ENCODE measurements at regions of chr11 and their contacts with region 1.

Region 1: DNA sequence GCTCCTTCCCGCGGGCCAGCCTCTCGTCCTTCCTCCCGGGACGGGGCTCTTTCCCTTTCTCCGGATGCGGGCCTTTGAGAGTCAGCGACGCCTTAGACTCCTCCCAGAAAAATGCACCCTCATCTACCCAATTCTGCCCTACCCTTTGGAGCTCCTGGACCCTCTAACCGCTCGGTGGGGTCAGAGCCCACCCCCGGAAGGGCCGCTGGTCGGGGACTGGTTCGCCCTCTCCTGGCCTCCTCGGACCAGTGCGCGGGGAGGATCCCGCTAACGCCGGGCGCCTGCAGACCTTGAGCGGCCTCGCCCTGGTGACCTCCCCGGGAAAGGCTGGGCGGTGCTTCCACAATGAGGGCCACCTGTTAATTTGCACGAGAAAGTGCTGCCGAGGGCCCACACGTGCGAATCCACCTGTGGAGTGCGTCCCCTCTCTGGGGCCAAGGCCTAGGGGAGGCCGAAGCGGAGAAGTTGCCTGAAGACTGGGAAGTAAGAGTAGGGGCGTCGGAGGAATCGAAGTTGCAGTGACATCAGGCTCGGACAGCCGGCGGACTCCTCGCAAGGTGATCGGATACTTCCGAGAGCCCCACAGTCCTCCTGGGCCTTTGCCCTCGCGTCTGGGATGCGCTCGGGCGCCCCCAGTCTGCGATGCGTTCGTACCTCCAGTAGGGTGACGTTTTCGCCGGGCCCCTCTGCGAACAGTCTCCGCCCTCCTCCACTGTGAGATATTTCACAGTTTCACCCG is 61.5 kb downstream of the ENDOD1 start:
- DNase-seq: peak; percentile 85 to 97
- ATAC-seq: peak; percentile 92 to 98 (median 93)
- H3K4me3 ChIP-seq: peak overlapping the region; percentile 73
- H3K4me3 Mint-ChIP-seq: peak overlapping the region; percentile 90
- H3K27ac ChIP-seq: peak overlapping the region; percentile 81
- H3K27ac Mint-ChIP-seq: peak overlapping the region; percentile 91 to 94
- H3K4me1 ChIP-seq: peaks cover 42% of the 10 kb centered on the region
- H3K4me1 Mint-ChIP-seq: peaks cover 27 to 40% of the 10 kb centered on the region in 2 donors
- H3K27me3 ChIP-seq: no peaks in the 10 kb centered on the region
- H3K27me3 Mint-ChIP-seq: peaks cover 7 to 12% of the 10 kb centered on the region in 2 donors
- CTCF ChIP-seq: peak; percentile 81

Region 2: GRCh38 chr11:94623120-94623735 is 527.9 kb before region 1 on chr11:
- intact Hi-C with region 1: loop called (anchors 5 kb)
- DNase-seq: peak in 1 of 2 donors; percentile 72
- ATAC-seq: peak; percentile 55 to 82 (median 75)
- H3K4me3 ChIP-seq: no peak overlapping the region
- H3K4me3 Mint-ChIP-seq: no peak overlapping the region
- H3K27ac ChIP-seq: no peak overlapping the region
- H3K27ac Mint-ChIP-seq: no peak overlapping the region
- H3K4me1 ChIP-seq: no peaks in the 10 kb centered on the region
- H3K4me1 Mint-ChIP-seq: no peaks in the 10 kb centered on the region
- H3K27me3 ChIP-seq: no peaks in the 10 kb centered on the region
- H3K27me3 Mint-ChIP-seq: peaks cover 0 to 6% of the 10 kb centered on the region in 2 donors
- CTCF ChIP-seq: peak; percentile 48

Region 3: GRCh38 chr11:95067039-95067840 is 83.9 kb before region 1 on chr11:
- intact Hi-C with region 1: loop called (anchors 1 kb)
- DNase-seq: peak; percentile 67 to 86
- ATAC-seq: peak; percentile 72 to 82 (median 74)
- H3K4me3 ChIP-seq: peak overlapping the region; percentile 74
- H3K4me3 Mint-ChIP-seq: peak overlapping the region; percentile 99
- H3K27ac ChIP-seq: peak overlapping the region; percentile 87
- H3K27ac Mint-ChIP-seq: peak overlapping the region; percentile 97 to 99
- H3K4me1 ChIP-seq: peaks cover 6% of the 10 kb centered on the region
- H3K4me1 Mint-ChIP-seq: peaks cover 36 to 38% of the 10 kb centered on the region in 2 donors
- H3K27me3 ChIP-seq: no peaks in the 10 kb centered on the region
- H3K27me3 Mint-ChIP-seq: peaks cover 0 to 5% of the 10 kb centered on the region in 2 donors
- CTCF ChIP-seq: no peak

Region 4: DNA sequence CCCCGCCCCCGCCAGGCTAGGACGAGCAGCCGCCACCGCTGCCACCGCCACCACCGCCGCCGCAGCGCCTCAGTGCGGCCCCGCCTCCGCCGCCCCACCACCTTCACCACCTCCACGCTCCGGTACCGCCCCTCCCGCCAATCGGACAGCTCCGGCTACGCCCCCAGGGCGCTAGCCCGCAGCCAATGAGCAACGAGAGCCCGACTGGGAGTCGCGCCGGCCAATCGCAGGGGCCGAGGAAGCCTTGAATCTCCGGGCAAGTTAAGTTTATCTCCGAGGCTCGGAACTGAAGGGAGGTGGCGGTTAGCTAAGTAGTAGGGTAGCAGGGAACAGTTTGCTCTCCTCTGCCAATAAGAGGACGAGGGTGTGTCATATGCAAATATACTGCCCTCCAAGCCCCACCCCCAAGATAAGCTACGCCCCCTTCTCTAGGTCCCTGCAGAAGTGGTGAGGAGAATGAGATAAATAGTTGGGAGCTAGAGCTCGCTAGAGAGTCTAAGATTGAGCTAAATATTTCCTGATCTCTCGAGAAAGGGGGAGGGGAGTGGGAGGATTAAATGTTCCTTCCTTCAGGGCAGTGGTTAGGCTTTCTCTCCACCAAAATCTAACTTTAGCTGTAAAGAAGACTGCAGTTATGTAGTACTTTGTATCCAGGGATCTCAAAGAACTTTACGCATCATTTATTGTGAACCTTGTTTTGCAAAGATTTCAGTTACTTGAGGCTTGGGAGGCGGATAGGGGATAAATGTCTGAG is 80.2 kb after region 1 on chr11 and contains the start of gene SESN3:
- intact Hi-C with region 1: loop called (anchors 1 kb)
- DNase-seq: peak; percentile 98
- ATAC-seq: peak; percentile 88 to 97 (median 90)
- H3K4me3 ChIP-seq: peak within 1 kb of the TSS; percentile 72
- H3K4me3 Mint-ChIP-seq: peak within 1 kb of the TSS; percentile 92
- H3K27ac ChIP-seq: peak within 1 kb of the TSS; percentile 87
- H3K27ac Mint-ChIP-seq: peak within 1 kb of the TSS in 1 of 2 donors; percentile 57
- H3K4me1 ChIP-seq: peaks cover 15% of the 10 kb centered on the region
- H3K4me1 Mint-ChIP-seq: peaks cover 13% of the 10 kb centered on the region in 2 donors
- H3K27me3 ChIP-seq: no peaks in the 10 kb centered on the region
- H3K27me3 Mint-ChIP-seq: peaks cover 3 to 16% of the 10 kb centered on the region in 2 donors
- CTCF ChIP-seq: no peak
- total RNA-seq, gene SESN3: 5.5 to 10.2 (median 7.6) TPM

Region 5: GRCh38 chr11:95705485-95706124 is 554.5 kb after region 1 on chr11:
- intact Hi-C with region 1: loop called (anchors 1 kb)
- DNase-seq: peak; percentile 57 to 93
- ATAC-seq: peak; percentile 89 to 94 (median 92)
- H3K4me3 ChIP-seq: no peak overlapping the region
- H3K4me3 Mint-ChIP-seq: no peak overlapping the region
- H3K27ac ChIP-seq: no peak overlapping the region
- H3K27ac Mint-ChIP-seq: no peak overlapping the region
- H3K4me1 ChIP-seq: peaks cover 3% of the 10 kb centered on the region
- H3K4me1 Mint-ChIP-seq: peaks cover 0 to 6% of the 10 kb centered on the region in 2 donors
- H3K27me3 ChIP-seq: no peaks in the 10 kb centered on the region
- H3K27me3 Mint-ChIP-seq: peaks cover 6 to 7% of the 10 kb centered on the region in 2 donors
- CTCF ChIP-seq: peak; percentile 83

Region 6: GRCh38 chr11:96424693-96425092 is 1273.6 kb after region 1 on chr11:
- intact Hi-C with region 1: loop called (anchors 5 kb)
- DNase-seq: no peak
- ATAC-seq: no peak
- H3K4me3 ChIP-seq: no peak overlapping the region
- H3K4me3 Mint-ChIP-seq: no peak overlapping the region
- H3K27ac ChIP-seq: no peak overlapping the region
- H3K27ac Mint-ChIP-seq: no peak overlapping the region
- H3K4me1 ChIP-seq: no peaks in the 10 kb centered on the region
- H3K4me1 Mint-ChIP-seq: no peaks in the 10 kb centered on the region
- H3K27me3 ChIP-seq: peaks cover 13% of the 10 kb centered on the region
- H3K27me3 Mint-ChIP-seq: peaks cover 27 to 60% of the 10 kb centered on the region in 2 donors
- CTCF ChIP-seq: no peak

Measured in natural killer cell (primary cell).